Activated CD4-positive, alpha-beta T cell treated with anti-CD3 and anti-CD28 coated beads for 36 hours (primary cell): ENCODE measurements at regions of chr12 and their contacts with region 1.

Region 1: DNA sequence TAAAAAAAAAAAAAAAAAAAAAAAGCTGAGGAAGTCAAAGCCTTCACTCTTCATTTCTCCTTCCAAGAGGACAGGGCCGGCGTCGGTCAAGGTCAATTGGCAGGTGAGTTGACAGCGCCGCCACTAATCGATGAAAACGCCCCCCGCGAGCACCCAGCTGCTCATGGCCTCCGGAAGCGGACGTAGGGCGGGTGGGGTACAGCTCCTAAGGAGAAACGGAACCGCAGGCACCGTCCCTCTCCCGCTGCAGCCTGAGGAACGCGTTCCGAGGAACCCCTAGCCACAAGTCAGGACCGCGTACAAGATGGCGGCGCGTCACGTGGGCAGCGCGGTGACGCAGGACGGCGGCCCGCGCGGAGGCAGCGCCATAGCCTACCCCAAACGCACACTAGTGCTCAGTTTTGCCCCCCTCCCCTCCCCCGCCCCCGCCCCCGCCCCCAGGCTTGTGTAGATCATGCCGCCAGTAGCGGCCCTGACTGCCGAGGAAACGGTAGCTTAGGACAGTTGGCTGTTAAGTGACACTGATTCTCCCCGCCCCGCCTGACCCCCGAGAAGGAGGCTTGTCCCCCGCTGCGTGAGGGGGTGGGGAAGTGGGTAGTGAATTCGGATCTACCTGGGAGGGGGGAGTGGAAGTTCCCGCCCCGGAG is at the start of gene ATF1:
- DNase-seq: peak; percentile 94
- ATAC-seq: peak; percentile 89
- H3K4me3 Mint-ChIP-seq: peak within 1 kb of the TSS; percentile 95
- H3K27ac Mint-ChIP-seq: peak within 1 kb of the TSS; percentile 97
- H3K4me1 Mint-ChIP-seq: peaks cover 38% of the 10 kb centered on the region
- H3K27me3 Mint-ChIP-seq: no peaks in the 10 kb centered on the region
- total RNA-seq, gene ATF1: 53.0 to 67.3 TPM

Region 2: DNA sequence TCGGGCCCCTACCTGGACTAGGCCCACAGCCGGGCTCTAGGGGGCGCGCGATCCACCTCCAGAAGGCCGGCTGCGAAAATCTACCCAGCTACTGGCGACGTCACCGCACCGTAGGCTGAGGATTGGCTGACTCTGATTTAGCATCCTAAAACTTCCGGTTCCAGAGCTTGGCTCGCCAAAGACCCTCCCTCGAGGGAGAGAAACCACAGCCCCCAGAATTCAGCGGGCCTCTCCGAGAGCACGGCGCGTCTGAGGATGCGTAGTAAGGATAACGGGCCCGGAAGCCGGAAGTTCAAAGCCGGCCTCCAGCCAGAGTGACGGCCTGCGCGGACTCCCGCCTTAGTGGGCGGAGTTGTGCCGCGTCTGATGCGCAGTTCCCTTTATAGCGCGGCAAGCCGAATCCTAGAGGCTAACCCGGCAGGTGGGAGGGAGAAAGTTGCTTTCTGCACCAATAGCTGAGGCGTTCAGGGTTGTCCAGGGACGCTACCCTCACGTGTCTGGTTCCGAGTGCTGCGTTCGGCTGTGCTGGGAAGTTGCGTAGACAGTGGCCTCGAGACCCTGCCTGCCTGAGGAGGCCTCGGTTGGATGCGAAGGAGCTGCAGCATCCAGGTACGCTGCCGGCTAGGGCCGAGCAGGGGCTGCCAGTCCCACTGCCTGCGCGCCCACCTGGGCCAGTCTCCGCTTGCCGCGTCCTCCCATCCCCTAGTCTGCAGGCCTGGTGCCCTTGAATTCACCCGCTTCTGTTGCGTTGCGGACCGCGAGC is 651.9 kb before region 1 on chr12 and contains the start of gene COX14:
- CTCF ChIA-PET with region 1: interaction called, 5 read pairs
- POLR2A ChIA-PET with region 1: interaction called, 4 read pairs
- intact Hi-C with region 1: loop called in 1 of 2 experiments (anchors 1 kb)
- DNase-seq: peak; percentile 99
- ATAC-seq: peak; percentile 91
- H3K4me3 Mint-ChIP-seq: peak within 1 kb of the TSS; percentile 100
- H3K27ac Mint-ChIP-seq: peak within 1 kb of the TSS; percentile 99
- H3K4me1 Mint-ChIP-seq: peaks cover 38% of the 10 kb centered on the region
- H3K27me3 Mint-ChIP-seq: no peaks in the 10 kb centered on the region
- total RNA-seq, gene COX14: 26.8 to 44.2 TPM

Region 3: DNA sequence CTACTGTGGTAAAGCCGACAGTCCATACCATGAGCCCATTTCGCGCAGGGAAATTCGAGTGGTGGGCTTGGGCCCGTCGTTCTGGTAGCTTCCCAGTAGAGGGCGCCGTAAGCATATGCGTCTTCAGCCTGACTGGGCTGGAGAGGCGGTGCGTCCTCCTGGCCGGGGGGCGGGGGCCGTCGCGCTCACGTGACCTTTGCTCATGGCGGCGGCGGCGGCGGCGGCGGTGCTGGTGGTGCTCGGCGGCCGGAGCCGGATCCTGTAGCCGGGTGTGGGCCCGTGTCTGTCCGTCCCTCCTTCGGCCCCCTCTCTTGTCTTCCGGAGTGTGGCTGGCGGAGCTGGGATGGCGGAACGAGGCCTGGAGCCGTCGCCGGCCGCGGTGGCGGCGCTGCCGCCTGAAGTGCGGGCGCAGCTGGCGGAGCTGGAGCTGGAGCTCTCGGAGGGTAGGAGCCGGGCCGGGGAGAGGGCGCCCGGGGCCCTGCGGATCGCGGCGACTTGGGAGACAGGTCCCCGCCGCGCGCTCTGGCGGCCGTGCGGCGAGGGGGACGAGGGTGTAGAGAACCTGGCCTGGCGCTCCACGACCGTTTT is 258.9 kb before region 1 on chr12 and contains the start of gene DIP2B:
- CTCF ChIA-PET with region 1: interaction called, 4 read pairs
- POLR2A ChIA-PET with region 1: interaction called, 3 read pairs
- intact Hi-C with region 1: loop called (anchors 1 kb)
- DNase-seq: peak; percentile 98
- ATAC-seq: peak; percentile 85
- H3K4me3 Mint-ChIP-seq: peak within 1 kb of the TSS; percentile 98
- H3K27ac Mint-ChIP-seq: peak within 1 kb of the TSS; percentile 96
- H3K4me1 Mint-ChIP-seq: peaks cover 43% of the 10 kb centered on the region
- H3K27me3 Mint-ChIP-seq: no peaks in the 10 kb centered on the region
- total RNA-seq, gene DIP2B: 29.2 to 29.4 TPM

Region 4: DNA sequence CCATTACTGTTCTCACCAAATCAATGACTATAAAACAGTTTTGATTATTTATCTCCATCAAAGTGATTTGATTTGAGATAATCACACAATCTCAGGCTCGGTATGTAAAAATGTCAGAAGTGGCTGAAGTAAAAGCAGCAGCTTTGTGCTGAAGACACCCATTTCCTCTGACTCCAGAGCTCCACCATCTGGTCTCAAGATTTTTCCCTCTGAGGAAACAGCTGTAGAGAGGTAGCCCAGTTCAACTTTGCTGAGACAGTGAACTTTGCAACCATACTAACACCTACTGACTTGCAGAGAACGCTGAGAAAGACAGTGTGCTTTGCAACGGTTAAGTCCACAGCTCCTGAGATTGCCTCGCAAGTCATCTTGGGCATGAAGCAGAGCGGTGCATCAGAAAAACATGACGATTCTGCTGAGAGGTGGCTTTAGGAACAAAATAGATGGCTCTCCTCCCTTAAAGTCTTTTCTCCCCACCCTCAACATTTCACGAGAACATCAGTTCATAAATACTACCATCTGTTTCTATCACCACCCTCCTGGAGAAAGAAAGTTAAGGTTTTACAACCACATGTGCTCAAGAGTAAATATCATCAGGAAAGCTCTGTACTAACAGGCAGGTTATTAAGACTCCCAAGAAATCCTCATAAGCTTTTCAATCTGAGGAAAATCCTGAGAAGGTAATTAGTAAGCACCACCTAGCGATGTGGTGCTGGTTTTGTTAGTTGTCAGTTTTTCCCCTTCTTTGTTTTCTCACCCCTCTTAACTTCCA is 223.4 kb after region 1 on chr12:
- CTCF ChIA-PET with region 1: interaction called, 3 read pairs
- POLR2A ChIA-PET with region 1: no interaction called
- intact Hi-C with region 1: loop called (anchors 1 to 2 kb)
- DNase-seq: peak; percentile 46
- ATAC-seq: peak; percentile 60
- H3K4me3 Mint-ChIP-seq: no peak overlapping the region
- H3K27ac Mint-ChIP-seq: peak overlapping the region; percentile 38
- H3K4me1 Mint-ChIP-seq: peaks cover 57% of the 10 kb centered on the region
- H3K27me3 Mint-ChIP-seq: no peaks in the 10 kb centered on the region

Region 5: DNA sequence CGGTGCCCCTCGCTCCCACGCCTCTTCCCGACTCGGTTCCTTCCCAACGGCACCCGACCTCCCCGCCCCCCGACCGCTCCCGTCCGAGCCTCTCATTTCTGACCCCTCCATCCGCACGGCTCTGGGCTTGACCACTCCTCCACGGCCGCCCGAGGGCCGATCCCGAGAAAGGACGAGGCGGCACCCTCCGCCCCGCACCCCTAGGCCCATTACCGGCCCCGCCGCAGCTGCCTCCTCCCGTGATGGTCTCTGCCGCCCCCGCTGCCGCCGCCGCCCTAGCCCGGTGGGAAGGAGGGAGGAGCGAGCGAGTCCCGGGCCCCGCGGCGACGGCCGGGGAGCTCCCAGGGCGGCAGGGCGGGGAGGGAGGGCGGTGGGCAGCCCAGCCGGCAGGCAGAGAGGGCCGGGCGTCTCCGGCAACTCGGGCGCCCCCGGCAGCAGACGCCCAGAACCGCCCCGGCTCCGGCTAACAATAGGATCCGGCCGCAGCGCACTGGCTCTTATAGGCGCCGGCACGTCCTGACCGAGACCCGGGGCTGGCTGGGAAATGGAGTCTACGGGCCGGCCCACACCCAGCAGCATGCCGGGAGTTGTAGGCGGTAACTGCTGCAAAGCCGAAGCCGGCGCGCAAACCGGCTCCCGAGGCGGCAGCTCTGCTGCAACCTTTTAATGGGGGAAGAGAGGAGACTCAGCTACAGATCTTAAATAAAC is 319.5 kb after region 1 on chr12 and contains the start of gene CSRNP2:
- CTCF ChIA-PET with region 1: interaction called, 3 read pairs
- POLR2A ChIA-PET with region 1: no interaction called
- intact Hi-C with region 1: loop called in 1 of 2 experiments (anchors 2 kb)
- DNase-seq: peak; percentile 97
- ATAC-seq: peak; percentile 99
- H3K4me3 Mint-ChIP-seq: peak within 1 kb of the TSS; percentile 95
- H3K27ac Mint-ChIP-seq: peak within 1 kb of the TSS; percentile 86
- H3K4me1 Mint-ChIP-seq: peaks cover 46% of the 10 kb centered on the region
- H3K27me3 Mint-ChIP-seq: no peaks in the 10 kb centered on the region
- total RNA-seq, gene CSRNP2: 12.8 to 13.6 TPM

Region 6: GRCh38 chr12:51238510-51239334 is 475.0 kb after region 1 on chr12 and contains the start of gene DAZAP2:
- CTCF ChIA-PET with region 1: no interaction called
- POLR2A ChIA-PET with region 1: interaction called, 5 read pairs
- intact Hi-C with region 1: loop called in 1 of 2 experiments (anchors 1 kb)
- DNase-seq: peak; percentile 98
- ATAC-seq: peak; percentile 92
- H3K4me3 Mint-ChIP-seq: peak within 1 kb of the TSS; percentile 87
- H3K27ac Mint-ChIP-seq: peak within 1 kb of the TSS; percentile 100
- H3K4me1 Mint-ChIP-seq: peaks cover 36% of the 10 kb centered on the region
- H3K27me3 Mint-ChIP-seq: no peaks in the 10 kb centered on the region
- total RNA-seq, gene DAZAP2: 94.8 to 95.2 TPM